ENCODE measurements at regions of chr5 and their contacts with region 1.

Region 1: DNA sequence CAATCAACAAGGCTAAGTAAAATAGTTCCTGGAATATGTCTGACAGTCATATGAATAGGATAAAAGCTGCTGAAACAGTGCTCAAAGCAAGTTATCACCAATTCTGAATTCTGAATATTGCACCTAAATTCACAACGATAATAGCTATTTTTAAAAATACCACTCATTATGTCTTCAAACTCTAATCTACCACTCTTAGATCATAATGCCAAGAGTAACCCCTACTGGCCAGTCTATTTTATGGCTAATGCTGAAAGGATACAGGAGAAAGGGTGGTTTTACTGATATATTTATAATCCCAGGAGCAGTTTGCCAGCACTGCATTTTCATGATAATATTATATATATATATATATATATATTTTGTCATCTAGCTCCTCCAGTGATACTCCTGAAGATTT is 232.8 kb downstream of the PDE4D start:
- DNase-seq: peak; percentile 41
- ATAC-seq: peak; percentile 39
- H3K4me3 ChIP-seq: no peak overlapping the region
- H3K4me3 Mint-ChIP-seq: peak overlapping the region; percentile 15
- H3K27ac ChIP-seq: no peak overlapping the region
- H3K27ac Mint-ChIP-seq: no peak overlapping the region
- H3K4me1 ChIP-seq: peaks cover 24 to 36% of the 10 kb centered on the region in 2 donors
- H3K4me1 Mint-ChIP-seq: peaks cover 54% of the 10 kb centered on the region
- H3K27me3 ChIP-seq: no peaks in the 10 kb centered on the region
- H3K27me3 Mint-ChIP-seq: no peaks in the 10 kb centered on the region
- CTCF ChIP-seq: peak; percentile 35

Region 2: GRCh38 chr5:59390074-59390659 is 270.6 kb before region 1 on chr5:
- CTCF ChIA-PET with region 1: interaction called, 42 read pairs
- POLR2A ChIA-PET with region 1: no interaction called
- intact Hi-C with region 1: no loop called
- DNase-seq: peak; percentile 53
- ATAC-seq: no peak
- H3K4me3 ChIP-seq: no peak overlapping the region
- H3K4me3 Mint-ChIP-seq: no peak overlapping the region
- H3K27ac ChIP-seq: no peak overlapping the region
- H3K27ac Mint-ChIP-seq: no peak overlapping the region
- H3K4me1 ChIP-seq: no peaks in the 10 kb centered on the region
- H3K4me1 Mint-ChIP-seq: peaks cover 21% of the 10 kb centered on the region
- H3K27me3 ChIP-seq: no peaks in the 10 kb centered on the region
- H3K27me3 Mint-ChIP-seq: no peaks in the 10 kb centered on the region
- CTCF ChIP-seq: peak; percentile 95

Region 3: DNA sequence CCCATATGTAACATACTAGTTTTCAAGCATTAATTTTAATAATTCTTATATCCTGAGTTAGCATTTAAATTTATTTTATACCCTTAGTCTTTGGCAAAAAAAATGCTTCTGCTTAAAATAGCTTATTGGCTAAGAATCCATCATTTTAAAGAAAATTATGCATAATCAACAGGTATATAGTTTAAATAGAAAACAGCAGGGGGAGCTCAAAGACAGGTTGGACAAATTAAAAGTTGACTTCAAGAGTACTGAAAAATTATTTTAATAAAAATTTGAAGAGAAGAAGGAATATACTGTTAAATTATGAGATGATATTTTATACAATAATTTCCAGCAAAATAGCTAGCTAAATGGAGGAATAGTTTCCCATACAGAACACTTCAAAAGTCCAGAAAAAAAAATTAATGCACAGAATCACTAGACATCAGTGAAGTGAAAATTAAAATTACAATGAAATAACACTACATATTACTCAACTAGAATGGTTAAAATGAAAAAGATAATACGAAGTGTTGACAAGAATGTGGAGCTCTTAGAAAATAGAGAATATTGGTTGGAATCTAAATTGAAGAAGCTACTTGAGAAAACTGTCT is 154.4 kb before region 1 on chr5:
- CTCF ChIA-PET with region 1: interaction called, 63 read pairs
- POLR2A ChIA-PET with region 1: no interaction called
- intact Hi-C with region 1: no loop called
- DNase-seq: peak; percentile 57
- ATAC-seq: no peak
- H3K4me3 ChIP-seq: no peak overlapping the region
- H3K4me3 Mint-ChIP-seq: no peak overlapping the region
- H3K27ac ChIP-seq: no peak overlapping the region
- H3K27ac Mint-ChIP-seq: no peak overlapping the region
- H3K4me1 ChIP-seq: no peaks in the 10 kb centered on the region
- H3K4me1 Mint-ChIP-seq: no peaks in the 10 kb centered on the region
- H3K27me3 ChIP-seq: no peaks in the 10 kb centered on the region
- H3K27me3 Mint-ChIP-seq: no peaks in the 10 kb centered on the region
- CTCF ChIP-seq: peak; percentile 81

Region 4: GRCh38 chr5:59587489-59588337 is 73.0 kb before region 1 on chr5:
- CTCF ChIA-PET with region 1: no interaction called
- POLR2A ChIA-PET with region 1: no interaction called
- intact Hi-C with region 1: no loop called
- DNase-seq: peak; percentile 19
- ATAC-seq: no peak
- H3K4me3 ChIP-seq: no peak overlapping the region
- H3K4me3 Mint-ChIP-seq: no peak overlapping the region
- H3K27ac ChIP-seq: no peak overlapping the region
- H3K27ac Mint-ChIP-seq: no peak overlapping the region
- H3K4me1 ChIP-seq: peaks cover 19 to 24% of the 10 kb centered on the region in 2 donors
- H3K4me1 Mint-ChIP-seq: peaks cover 22% of the 10 kb centered on the region
- H3K27me3 ChIP-seq: peaks cover 0 to 2% (median 0%) of the 10 kb centered on the region in 4 experiments
- H3K27me3 Mint-ChIP-seq: peaks cover 11% of the 10 kb centered on the region
- CTCF ChIP-seq: no peak

Region 5: DNA sequence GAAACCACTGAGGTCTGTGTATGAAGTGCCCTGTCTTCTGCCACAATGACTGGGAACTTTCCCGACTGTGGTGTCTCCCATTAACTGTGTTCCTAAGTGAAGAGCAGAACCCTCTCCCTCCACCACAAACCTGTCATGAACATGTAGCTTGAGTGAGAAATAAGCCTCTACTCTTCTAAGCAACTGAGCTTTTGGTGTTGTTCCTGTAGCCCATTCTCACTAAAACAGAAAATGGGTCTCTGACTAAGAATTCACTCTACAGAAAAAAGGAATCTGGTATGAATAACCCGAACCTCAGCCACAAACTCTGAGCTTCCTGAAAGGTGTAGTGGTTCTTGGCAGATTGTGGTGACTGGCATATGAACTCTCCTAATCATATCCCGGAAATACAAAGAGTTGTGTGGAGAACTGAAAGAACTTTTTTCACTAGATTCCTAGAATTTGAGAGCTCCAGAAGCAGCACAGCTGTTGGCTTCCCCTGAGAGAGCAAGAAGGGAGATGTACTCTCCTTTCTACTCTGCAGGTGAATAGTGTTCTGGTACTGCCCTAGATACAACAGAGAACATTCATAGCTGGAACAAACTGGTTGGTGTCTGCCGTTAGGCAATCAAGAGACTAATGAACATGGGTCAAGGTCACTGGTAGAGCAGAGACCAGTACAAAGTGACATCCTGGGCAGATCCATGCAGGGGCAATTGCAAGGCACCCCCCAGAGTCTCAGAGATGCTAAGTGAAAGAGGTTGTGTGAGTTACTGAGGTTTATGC is 51.1 kb before region 1 on chr5:
- CTCF ChIA-PET with region 1: no interaction called
- POLR2A ChIA-PET with region 1: no interaction called
- intact Hi-C with region 1: loop called (anchors 5 kb)
- DNase-seq: no peak
- ATAC-seq: no peak
- H3K4me3 ChIP-seq: no peak overlapping the region
- H3K4me3 Mint-ChIP-seq: no peak overlapping the region
- H3K27ac ChIP-seq: no peak overlapping the region
- H3K27ac Mint-ChIP-seq: no peak overlapping the region
- H3K4me1 ChIP-seq: peaks cover 0 to 5% of the 10 kb centered on the region in 2 donors
- H3K4me1 Mint-ChIP-seq: peaks cover 24% of the 10 kb centered on the region
- H3K27me3 ChIP-seq: no peaks in the 10 kb centered on the region
- H3K27me3 Mint-ChIP-seq: peaks cover 4% of the 10 kb centered on the region
- CTCF ChIP-seq: no peak

Measured in B cell (primary cell).